ENCODE measurements at regions of chr1 and their contacts with region 1.

Region 1: DNA sequence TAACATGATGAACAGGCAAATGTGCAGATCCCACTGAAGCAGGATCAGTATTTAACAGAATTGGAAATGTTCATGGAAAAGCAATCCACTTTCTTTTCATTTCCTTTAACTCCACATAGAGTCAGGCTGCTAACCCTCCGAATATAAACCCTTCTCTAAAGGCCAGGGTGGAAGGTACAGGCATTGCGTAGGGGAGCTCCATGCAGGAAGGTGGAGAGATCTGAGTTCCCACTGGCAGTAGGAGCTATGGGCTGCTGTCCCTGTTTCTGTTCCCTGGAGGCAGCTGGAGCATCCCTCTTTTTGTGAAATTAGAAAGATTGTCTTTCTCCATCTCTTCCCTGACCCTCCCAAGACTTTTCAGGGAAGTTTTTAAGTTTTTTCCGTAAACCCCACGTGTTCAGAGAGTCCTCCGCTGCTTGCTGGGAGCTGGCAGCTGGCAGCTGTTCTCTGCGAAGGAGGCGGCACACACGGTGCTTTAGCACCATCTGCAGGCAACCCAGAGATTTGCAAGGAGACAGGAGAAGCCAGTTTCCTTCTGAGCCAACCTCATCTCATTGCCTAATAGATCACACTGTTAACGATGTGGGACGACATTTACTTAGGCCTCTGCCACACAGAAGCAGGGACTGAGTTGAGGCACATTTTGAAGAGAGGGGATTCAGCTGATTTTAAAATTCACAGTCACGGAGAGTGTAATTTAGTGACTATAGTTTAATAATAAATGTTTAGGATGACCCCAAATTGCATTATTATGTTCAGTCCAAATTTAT is 55.4 kb upstream of the HOOK1 start:
- DNase-seq: peak; percentile 68 to 79
- H3K4me3 ChIP-seq: no peak overlapping the region
- H3K4me1 ChIP-seq: no peaks in the 10 kb centered on the region
- H3K27me3 ChIP-seq: no peaks in the 10 kb centered on the region

Region 2: GRCh38 chr1:58546520-58547308 is 1212.6 kb before region 1 on chr1 and contains the start of gene OMA1:
- in situ Hi-C with region 1: loop called (anchors 25 kb)
- DNase-seq: peak; percentile 89 to 95
- H3K4me3 ChIP-seq: peak within 1 kb of the TSS; percentile 61
- H3K4me1 ChIP-seq: peaks cover 8% of the 10 kb centered on the region; the same call in 1 of the 2 replicates
- H3K27me3 ChIP-seq: no peaks in the 10 kb centered on the region

Region 3: GRCh38 chr1:58739856-58740466 is 1019.4 kb before region 1 on chr1:
- in situ Hi-C with region 1: loop called (anchors 10 kb)
- DNase-seq: peak; percentile 23 to 53
- H3K4me3 ChIP-seq: no peak overlapping the region
- H3K4me1 ChIP-seq: no peaks in the 10 kb centered on the region
- H3K27me3 ChIP-seq: no peaks in the 10 kb centered on the region

Region 4: DNA sequence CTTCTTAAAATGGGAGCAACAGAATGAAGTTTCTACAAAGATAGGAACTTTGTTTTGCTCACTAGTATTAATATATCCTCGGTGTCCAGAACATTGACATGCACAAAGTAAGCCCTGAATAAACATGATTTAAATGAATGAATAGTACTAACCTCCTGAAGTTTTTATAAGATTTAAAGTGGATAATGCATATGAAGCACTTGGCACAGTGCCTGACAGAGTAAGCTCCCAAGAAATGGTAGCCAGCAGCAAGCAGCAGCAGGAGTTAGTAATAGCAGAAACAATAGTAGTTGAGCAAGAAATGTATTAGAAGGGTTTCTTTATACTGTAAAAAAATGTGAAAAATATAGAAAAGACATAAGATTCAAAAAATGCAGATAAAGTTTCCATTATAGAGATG is 572.3 kb after region 1 on chr1:
- in situ Hi-C with region 1: no loop called
- DNase-seq: no peak
- H3K4me3 ChIP-seq: no peak overlapping the region
- H3K4me1 ChIP-seq: no peaks in the 10 kb centered on the region
- H3K27me3 ChIP-seq: no peaks in the 10 kb centered on the region

Measured in HAP-1 (cell line).